Naive thymus-derived CD4-positive, alpha-beta T cell (primary cell): ENCODE measurements at regions of chr4 and their contacts with region 1.

Region 1: DNA sequence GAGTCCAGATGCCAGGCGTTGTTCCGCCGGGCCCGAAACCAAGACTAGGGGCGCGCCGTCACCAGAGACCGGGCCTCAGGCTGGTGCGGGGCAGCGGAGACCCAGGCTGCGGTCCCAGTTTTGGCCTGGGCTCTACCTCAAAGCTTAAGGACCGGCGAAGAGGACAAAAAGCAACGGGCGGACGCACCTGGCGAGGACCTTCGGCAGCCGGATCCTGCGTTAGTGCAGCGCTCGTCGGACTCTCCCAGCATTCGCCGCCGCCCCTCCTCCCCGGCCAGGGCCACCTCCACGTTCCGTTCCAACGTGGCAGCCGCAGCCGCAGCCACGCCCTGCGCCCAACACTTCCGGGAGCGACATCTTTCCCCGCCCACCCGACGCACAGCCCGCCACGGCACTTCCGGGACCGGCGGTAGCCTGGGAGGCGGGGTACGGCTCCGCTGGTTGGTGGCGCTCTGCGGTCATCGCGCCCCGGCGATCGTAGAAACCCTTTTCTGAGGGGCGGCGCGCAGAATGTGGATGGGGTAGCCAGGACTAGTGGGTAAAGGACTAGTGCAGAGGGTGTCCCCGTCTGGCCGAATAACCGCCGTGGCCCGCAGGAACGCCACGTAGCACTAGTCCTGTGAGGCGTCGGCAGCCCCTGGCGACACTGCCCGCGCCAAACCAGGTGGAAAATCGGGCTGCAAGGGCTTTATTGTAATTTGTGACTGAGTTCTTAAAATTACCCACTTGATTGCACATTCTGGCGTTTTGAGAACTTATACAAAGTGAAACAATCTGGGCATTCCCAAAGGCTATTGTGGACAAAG is at the start of gene SEC31A:
- DNase-seq: peak; percentile 89 to 98 (median 95)
- ATAC-seq: peak; percentile 97
- H3K4me3 ChIP-seq: peak within 1 kb of the TSS; percentile 96
- H3K4me3 Mint-ChIP-seq: peak within 1 kb of the TSS; percentile 86 to 96 (median 93)
- H3K27ac ChIP-seq: peak within 1 kb of the TSS; percentile 99
- H3K27ac Mint-ChIP-seq: peak within 1 kb of the TSS; percentile 92 to 99 (median 97)
- H3K4me1 ChIP-seq: peaks cover 11 to 12% of the 10 kb centered on the region in 2 donors
- H3K4me1 Mint-ChIP-seq: peaks cover 18 to 51% (median 41%) of the 10 kb centered on the region in 7 donors
- H3K27me3 ChIP-seq: no peaks in the 10 kb centered on the region
- H3K27me3 Mint-ChIP-seq: no peaks in the 10 kb centered on the region
- total RNA-seq, gene SEC31A: 137 to 168 (median 149) TPM

Region 2: GRCh38 chr4:82462415-82462831 is 428.7 kb before region 1 on chr4:
- CTCF ChIA-PET with region 1: no interaction called
- POLR2A ChIA-PET with region 1: no interaction called
- intact Hi-C with region 1: loop called in 1 of 2 experiments (anchors 1 kb)
- DNase-seq: peak; percentile 60 to 83 (median 79)
- ATAC-seq: peak; percentile 96
- H3K4me3 ChIP-seq: no peak overlapping the region
- H3K4me3 Mint-ChIP-seq: no peak overlapping the region
- H3K27ac ChIP-seq: no peak overlapping the region
- H3K27ac Mint-ChIP-seq: peak overlapping the region in 1 of 9 donors; percentile 34
- H3K4me1 ChIP-seq: no peaks in the 10 kb centered on the region
- H3K4me1 Mint-ChIP-seq: peaks cover 0 to 5% (median 0%) of the 10 kb centered on the region in 7 donors
- H3K27me3 ChIP-seq: no peaks in the 10 kb centered on the region
- H3K27me3 Mint-ChIP-seq: no peaks in the 10 kb centered on the region

Region 3: DNA sequence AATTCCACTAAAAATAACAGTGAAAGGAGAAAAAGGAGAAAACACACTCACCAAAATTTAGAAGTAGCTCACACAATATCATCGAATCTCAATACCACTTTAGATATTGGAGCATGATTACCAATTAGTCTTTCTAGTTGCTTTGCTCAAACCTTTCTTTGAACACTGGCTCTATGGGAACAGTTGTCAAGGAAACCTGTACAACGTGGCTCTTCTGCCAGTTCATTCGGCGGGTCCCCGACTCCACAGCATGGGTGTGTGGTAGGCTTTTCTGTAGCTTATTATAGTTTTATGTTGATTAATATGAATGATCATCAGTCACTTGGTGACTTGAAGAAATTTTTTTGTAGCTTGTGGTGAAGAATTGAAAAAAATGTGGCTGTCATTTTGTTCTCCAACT is 279.1 kb before region 1 on chr4:
- CTCF ChIA-PET with region 1: no interaction called
- POLR2A ChIA-PET with region 1: no interaction called
- intact Hi-C with region 1: no loop called
- DNase-seq: no peak
- ATAC-seq: no peak
- H3K4me3 ChIP-seq: no peak overlapping the region
- H3K4me3 Mint-ChIP-seq: no peak overlapping the region
- H3K27ac ChIP-seq: no peak overlapping the region
- H3K27ac Mint-ChIP-seq: no peak overlapping the region
- H3K4me1 ChIP-seq: no peaks in the 10 kb centered on the region
- H3K4me1 Mint-ChIP-seq: no peaks in the 10 kb centered on the region
- H3K27me3 ChIP-seq: no peaks in the 10 kb centered on the region
- H3K27me3 Mint-ChIP-seq: peaks cover 0 to 9% (median 2%) of the 10 kb centered on the region in 5 donors

Region 4: GRCh38 chr4:82851885-82852750 is 39.0 kb before region 1 on chr4:
- CTCF ChIA-PET with region 1: interaction called, 3 read pairs
- POLR2A ChIA-PET with region 1: interaction called, 5 read pairs
- intact Hi-C with region 1: loop called in 1 of 2 experiments (anchors 2 kb)
- DNase-seq: peak in 6 of 9 donors; percentile 20 to 38 (median 32)
- ATAC-seq: peak; percentile 58
- H3K4me3 ChIP-seq: no peak overlapping the region
- H3K4me3 Mint-ChIP-seq: no peak overlapping the region
- H3K27ac ChIP-seq: no peak overlapping the region
- H3K27ac Mint-ChIP-seq: peak overlapping the region in 4 of 9 donors; percentile 21 to 47 (median 30)
- H3K4me1 ChIP-seq: no peaks in the 10 kb centered on the region
- H3K4me1 Mint-ChIP-seq: peaks cover 0 to 17% (median 3%) of the 10 kb centered on the region in 7 donors
- H3K27me3 ChIP-seq: no peaks in the 10 kb centered on the region
- H3K27me3 Mint-ChIP-seq: no peaks in the 10 kb centered on the region

Region 5: DNA sequence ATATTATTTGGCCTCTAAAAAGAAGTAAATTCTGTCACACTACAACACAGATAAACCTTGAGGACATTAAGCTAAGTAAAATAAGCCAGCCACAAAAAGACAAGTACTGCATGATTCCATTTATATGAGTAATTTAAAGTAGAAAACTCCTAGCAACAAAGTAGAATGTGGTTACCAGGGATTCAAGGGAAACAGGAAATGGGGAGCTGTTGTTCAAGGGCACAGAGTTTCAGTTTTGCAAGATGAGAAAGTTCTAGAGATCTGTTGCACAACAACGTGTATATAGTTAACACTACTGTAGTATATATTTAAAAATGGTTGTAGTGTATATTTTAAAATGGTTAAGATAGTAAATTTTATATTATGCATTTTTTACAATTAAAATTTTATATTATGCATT is 25.5 kb before region 1 on chr4:
- CTCF ChIA-PET with region 1: no interaction called
- POLR2A ChIA-PET with region 1: interaction called, 6 read pairs
- intact Hi-C with region 1: loop called (anchors 1 to 2 kb)
- DNase-seq: peak in 7 of 9 donors; percentile 20 to 53 (median 30)
- ATAC-seq: peak; percentile 70
- H3K4me3 ChIP-seq: no peak overlapping the region
- H3K4me3 Mint-ChIP-seq: peak overlapping the region in 9 of 10 donors; percentile 33 to 79 (median 63)
- H3K27ac ChIP-seq: peak overlapping the region; percentile 56
- H3K27ac Mint-ChIP-seq: peak overlapping the region; percentile 44 to 94 (median 86)
- H3K4me1 ChIP-seq: peaks cover 13 to 19% of the 10 kb centered on the region in 2 donors
- H3K4me1 Mint-ChIP-seq: peaks cover 19 to 43% (median 33%) of the 10 kb centered on the region in 7 donors
- H3K27me3 ChIP-seq: no peaks in the 10 kb centered on the region
- H3K27me3 Mint-ChIP-seq: no peaks in the 10 kb centered on the region

Region 6: GRCh38 chr4:83083925-83084475 is 192.9 kb after region 1 on chr4:
- CTCF ChIA-PET with region 1: no interaction called
- POLR2A ChIA-PET with region 1: no interaction called
- intact Hi-C with region 1: no loop called
- DNase-seq: peak; percentile 36 to 86 (median 77)
- ATAC-seq: peak; percentile 98
- H3K4me3 ChIP-seq: no peak overlapping the region
- H3K4me3 Mint-ChIP-seq: peak overlapping the region; percentile 43 to 74 (median 62)
- H3K27ac ChIP-seq: peak overlapping the region; percentile 70
- H3K27ac Mint-ChIP-seq: peak overlapping the region; percentile 88 to 99 (median 94)
- H3K4me1 ChIP-seq: peaks cover 12 to 29% of the 10 kb centered on the region in 2 donors
- H3K4me1 Mint-ChIP-seq: peaks cover 25 to 55% (median 43%) of the 10 kb centered on the region in 7 donors
- H3K27me3 ChIP-seq: no peaks in the 10 kb centered on the region
- H3K27me3 Mint-ChIP-seq: no peaks in the 10 kb centered on the region

Region 7: DNA sequence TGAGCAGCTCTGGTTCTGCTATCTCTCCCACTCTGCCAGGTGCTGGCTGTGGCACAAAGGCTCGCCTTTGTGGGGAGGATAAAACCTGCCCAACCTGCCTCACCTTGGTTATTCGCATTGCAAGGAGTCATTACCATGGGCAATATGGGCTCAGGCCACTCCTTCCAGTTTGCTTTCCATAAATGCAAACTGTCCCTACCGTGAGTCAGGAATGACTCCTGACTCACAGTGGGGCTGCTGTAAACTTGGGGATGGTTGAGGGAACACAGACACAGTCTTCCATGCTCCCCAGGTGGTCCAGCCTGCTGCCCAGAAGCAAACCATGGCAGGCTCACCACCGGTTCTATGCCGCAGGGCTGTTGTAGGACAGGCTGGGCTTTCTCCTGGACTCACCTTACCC is 357.4 kb after region 1 on chr4:
- CTCF ChIA-PET with region 1: no interaction called
- POLR2A ChIA-PET with region 1: no interaction called
- intact Hi-C with region 1: no loop called
- DNase-seq: no peak
- ATAC-seq: no peak
- H3K4me3 ChIP-seq: no peak overlapping the region
- H3K4me3 Mint-ChIP-seq: no peak overlapping the region
- H3K27ac ChIP-seq: no peak overlapping the region
- H3K27ac Mint-ChIP-seq: no peak overlapping the region
- H3K4me1 ChIP-seq: peaks cover 10 to 12% of the 10 kb centered on the region in 2 donors
- H3K4me1 Mint-ChIP-seq: peaks cover 20 to 51% (median 28%) of the 10 kb centered on the region in 7 donors
- H3K27me3 ChIP-seq: no peaks in the 10 kb centered on the region
- H3K27me3 Mint-ChIP-seq: peaks cover 0 to 38% (median 0%) of the 10 kb centered on the region in 5 donors